ENCODE measurements at regions of chr2 and their contacts with region 1.

Region 1: DNA sequence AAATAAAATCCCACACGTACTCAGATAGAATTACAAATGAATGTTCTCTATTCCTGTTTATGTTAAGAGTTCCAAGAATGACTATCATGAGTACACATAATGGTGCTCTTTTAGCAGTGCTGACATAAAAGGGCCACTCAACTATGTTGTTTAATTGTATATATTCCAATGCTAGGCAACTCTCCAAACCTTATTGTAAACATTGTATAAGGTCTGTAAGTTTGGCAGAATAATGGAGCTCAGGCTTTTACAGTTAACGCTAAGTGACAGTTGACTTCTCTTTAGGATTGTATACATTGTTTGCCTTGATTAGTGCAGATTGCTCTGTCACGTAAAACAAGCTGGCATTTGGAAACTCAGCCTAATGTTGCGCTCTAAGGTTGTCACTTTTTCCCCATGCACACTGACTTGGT is 20.8 kb downstream of the RBMS1 start:
- DNase-seq: peak; percentile 65
- H3K4me3 ChIP-seq: peak overlapping the region; percentile 23
- H3K27ac ChIP-seq: peak overlapping the region; percentile 50
- H3K27me3 ChIP-seq: no peaks in the 10 kb centered on the region
- CTCF ChIP-seq: no peak

Region 2: DNA sequence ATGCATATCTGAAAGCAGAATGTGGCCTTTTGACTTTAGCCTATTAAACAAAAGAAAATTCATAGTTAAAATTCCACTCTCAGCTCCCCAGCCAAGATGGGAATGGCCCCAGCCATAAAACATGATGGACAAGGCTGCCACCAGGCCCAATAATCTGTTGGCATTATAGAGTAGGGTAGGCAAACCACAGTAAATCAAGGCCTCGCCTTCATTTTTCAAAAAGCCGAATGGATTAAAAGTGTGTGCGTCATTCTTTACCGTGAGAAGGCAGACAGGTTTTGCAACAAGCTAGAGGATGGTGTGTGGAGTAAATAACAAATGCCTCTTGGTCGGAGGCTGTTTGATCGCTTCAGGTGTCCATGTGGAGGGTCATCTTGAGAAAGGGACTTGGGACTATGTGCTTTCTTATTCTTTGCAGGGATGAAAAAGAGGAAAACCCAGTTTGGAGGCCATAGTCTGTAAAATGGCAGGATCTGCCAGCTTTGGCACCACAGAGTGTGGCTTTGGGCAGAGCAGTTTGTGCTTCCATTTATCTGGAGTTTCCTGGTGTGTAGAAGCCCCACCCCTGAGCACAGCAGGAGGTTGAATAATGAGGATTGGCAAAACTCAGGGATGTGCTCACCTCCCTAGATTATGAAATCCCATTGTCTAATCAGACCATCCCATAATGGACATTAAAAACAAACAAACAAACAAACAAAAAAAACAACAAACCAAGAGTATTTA is 215.7 kb before region 1 on chr2:
- CTCF ChIA-PET with region 1: no interaction called
- POLR2A ChIA-PET with region 1: no interaction called
- DNase-seq: no peak
- H3K4me3 ChIP-seq: no peak overlapping the region
- H3K27ac ChIP-seq: no peak overlapping the region
- H3K27me3 ChIP-seq: no peaks in the 10 kb centered on the region
- CTCF ChIP-seq: no peak

Region 3: DNA sequence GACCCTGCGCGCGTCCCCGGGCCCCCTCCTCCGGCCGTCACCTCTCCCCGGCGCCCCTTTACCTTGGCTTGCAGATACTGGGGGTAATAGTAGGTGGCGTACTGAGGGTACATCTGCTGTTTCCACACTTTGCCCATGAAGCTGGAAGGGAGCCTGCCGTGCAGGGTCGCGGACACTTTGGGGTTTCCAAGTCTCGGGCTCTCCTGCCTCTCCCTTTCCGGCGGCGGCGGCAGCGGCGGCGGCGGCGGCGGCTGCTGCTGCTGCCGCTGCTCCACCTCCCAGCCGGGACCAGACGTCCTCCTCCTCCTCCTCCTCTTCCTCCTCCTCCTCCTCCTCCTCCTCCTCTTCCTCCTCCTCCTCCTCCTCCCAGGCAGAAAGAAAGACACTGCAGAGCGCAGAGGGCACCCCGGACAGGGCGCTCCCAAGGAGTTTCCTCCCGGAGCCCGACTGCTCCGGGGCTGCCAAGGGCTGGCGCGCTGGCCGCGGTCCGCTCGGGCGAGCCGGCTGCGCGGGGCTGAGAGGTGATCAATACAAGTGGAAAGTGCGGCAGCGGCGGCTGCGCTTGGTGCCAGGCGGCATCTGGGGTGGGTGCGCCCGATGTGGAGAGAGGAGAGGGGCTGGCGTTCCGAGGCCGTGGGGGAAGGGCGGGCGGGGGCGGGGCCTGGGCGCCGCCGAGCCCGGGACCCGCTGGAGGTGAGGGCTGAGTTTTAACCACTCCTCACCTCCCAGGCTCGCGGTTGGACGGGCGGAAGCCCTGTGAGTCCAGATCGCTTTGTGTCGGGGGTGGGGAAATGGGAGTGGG is 20.6 kb after region 1 on chr2 and contains the start of gene RBMS1:
- CTCF ChIA-PET with region 1: no interaction called
- POLR2A ChIA-PET with region 1: interaction called, 10 read pairs
- DNase-seq: no peak
- H3K4me3 ChIP-seq: peak within 1 kb of the TSS; percentile 83
- H3K27ac ChIP-seq: peak within 1 kb of the TSS; percentile 82
- H3K27me3 ChIP-seq: no peaks in the 10 kb centered on the region
- CTCF ChIP-seq: no peak
- polyA plus RNA-seq, gene RBMS1: 89.4 and 107 TPM in 2 replicates

Measured in AG04450 (cell line).